Thyroid gland (tissue), 4 donors: ENCODE measurements at regions of chr7 and their contacts with region 1.

Region 1: GRCh38 chr7:74401137-74401859 is 52.4 kb upstream of the GTF2IRD1 start:
- DNase-seq: peak; percentile 71 to 75
- H3K4me3 ChIP-seq: no peak overlapping the region
- H3K27ac ChIP-seq: no peak overlapping the region
- H3K4me1 ChIP-seq: no peaks in the 10 kb centered on the region
- H3K27me3 ChIP-seq: no peaks in the 10 kb centered on the region
- CTCF ChIP-seq: peak; percentile 90 to 99 (median 95)
- POLR2A ChIP-seq: no peak

Region 2: GRCh38 chr7:73865738-73866445 is 535.4 kb before region 1 on chr7:
- intact Hi-C with region 1: loop called (anchors 10 kb)
- DNase-seq: peak; percentile 46 to 55
- H3K4me3 ChIP-seq: no peak overlapping the region
- H3K27ac ChIP-seq: no peak overlapping the region
- H3K4me1 ChIP-seq: peaks cover 8 to 20% of the 10 kb centered on the region in 2 donors
- H3K27me3 ChIP-seq: no peaks in the 10 kb centered on the region
- CTCF ChIP-seq: peak in 4 of 6 experiments; percentile 32 to 61 (median 59)
- POLR2A ChIP-seq: no peak

Region 3: DNA sequence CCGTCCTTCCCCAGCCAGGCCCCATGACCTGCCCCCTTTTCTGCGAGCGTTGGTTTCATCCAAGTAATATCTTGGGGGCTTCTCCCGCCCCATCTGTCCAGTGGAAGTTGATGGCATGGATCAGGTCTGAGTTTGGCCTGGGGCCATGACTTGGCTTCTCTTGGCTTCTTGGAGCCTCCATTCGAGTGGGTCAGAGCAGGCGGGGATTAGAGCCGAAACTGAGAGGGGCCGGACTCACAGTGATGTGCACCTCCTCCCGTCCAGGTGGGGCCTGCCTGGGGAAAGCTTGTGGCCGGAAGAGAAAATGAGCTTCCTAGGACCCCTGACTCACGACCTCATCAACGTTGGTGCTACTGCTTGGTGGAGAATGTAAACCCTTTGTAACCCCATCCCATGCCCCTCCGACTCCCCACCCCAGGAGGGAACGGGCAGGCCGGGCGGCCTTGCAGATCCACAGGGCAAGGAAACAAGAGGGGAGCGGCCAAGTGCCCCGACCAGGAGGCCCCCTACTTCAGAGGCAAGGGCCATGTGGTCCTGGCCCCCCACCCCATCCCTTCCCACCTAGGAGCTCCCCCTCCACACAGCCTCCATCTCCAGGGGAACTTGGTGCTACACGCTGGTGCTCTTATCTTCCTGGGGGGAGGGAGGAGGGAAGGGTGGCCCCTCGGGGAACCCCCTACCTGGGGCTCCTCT is 332.8 kb before region 1 on chr7:
- intact Hi-C with region 1: loop called (anchors 5 kb)
- DNase-seq: no peak
- H3K4me3 ChIP-seq: no peak overlapping the region
- H3K27ac ChIP-seq: no peak overlapping the region
- H3K4me1 ChIP-seq: no peaks in the 10 kb centered on the region
- H3K27me3 ChIP-seq: no peaks in the 10 kb centered on the region
- CTCF ChIP-seq: no peak
- POLR2A ChIP-seq: no peak

Region 4: GRCh38 chr7:74206589-74207120 is 194.6 kb before region 1 on chr7:
- intact Hi-C with region 1: loop called (anchors 5 kb)
- DNase-seq: peak; percentile 86 to 89
- H3K4me3 ChIP-seq: no peak overlapping the region
- H3K27ac ChIP-seq: no peak overlapping the region
- H3K4me1 ChIP-seq: no peaks in the 10 kb centered on the region
- H3K27me3 ChIP-seq: no peaks in the 10 kb centered on the region
- CTCF ChIP-seq: peak; percentile 86 to 100 (median 92)
- POLR2A ChIP-seq: no peak

Region 5: GRCh38 chr7:74302745-74303221 is 98.5 kb before region 1 on chr7:
- intact Hi-C with region 1: no loop called
- DNase-seq: no peak
- H3K4me3 ChIP-seq: no peak overlapping the region
- H3K27ac ChIP-seq: no peak overlapping the region
- H3K4me1 ChIP-seq: peaks cover 0 to 12% of the 10 kb centered on the region in 2 donors
- H3K27me3 ChIP-seq: no peaks in the 10 kb centered on the region
- CTCF ChIP-seq: no peak
- POLR2A ChIP-seq: no peak